ENCODE measurements at regions of chr7 and their contacts with region 1.

Region 1: GRCh38 chr7:32266932-32267475 is 196.8 kb upstream of the PDE1C start:
- DNase-seq: no peak
- H3K4me3 ChIP-seq: no peak overlapping the region
- H3K27ac ChIP-seq: no peak overlapping the region
- H3K4me1 ChIP-seq: peaks cover 0 to 2% (median 0%) of the 10 kb centered on the region in 4 experiments; a peak in 3 of 7 replicates
- H3K27me3 ChIP-seq: peaks cover 0 to 1% (median 0%) of the 10 kb centered on the region in 4 experiments; a peak in 1 of 7 replicates
- CTCF ChIP-seq: peak; percentile 51 to 61 (median 53)
- EP300 ChIP-seq: no peak
- POLR2A ChIP-seq: no peak
- RAD21 ChIP-seq: peak; percentile 82 to 84

Region 2: DNA sequence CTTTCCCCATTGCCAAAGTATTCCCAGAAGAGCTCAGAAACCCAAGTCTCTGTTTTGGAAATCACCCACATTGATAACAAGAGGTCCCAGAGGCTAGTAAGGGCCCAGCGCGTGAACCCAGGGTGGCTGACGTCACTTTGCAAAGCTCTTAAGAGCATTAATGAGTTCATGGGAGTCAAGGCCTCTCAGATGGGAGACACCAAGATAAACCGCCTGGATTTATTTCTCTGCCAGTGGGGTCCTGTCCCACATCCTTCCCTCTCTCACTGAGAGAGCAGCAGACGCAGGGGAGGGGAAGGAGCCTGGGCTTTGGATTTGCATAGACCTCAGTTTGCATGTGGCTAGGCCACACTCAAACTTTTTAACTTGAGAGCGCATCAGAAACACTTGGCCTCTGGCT is 12.0 kb before region 1 on chr7:
- CTCF ChIA-PET with region 1: interaction called, 14 read pairs
- POLR2A ChIA-PET with region 1: no interaction called
- DNase-seq: no peak
- H3K4me3 ChIP-seq: no peak overlapping the region
- H3K27ac ChIP-seq: no peak overlapping the region
- H3K4me1 ChIP-seq: peaks cover 0 to 2% (median 1%) of the 10 kb centered on the region in 4 experiments; a peak in 3 of 7 replicates
- H3K27me3 ChIP-seq: no peaks in the 10 kb centered on the region; a peak in 1 of 7 replicates
- CTCF ChIP-seq: no peak
- EP300 ChIP-seq: no peak
- POLR2A ChIP-seq: no peak
- RAD21 ChIP-seq: no peak

Region 3: GRCh38 chr7:32357535-32358277 is 90.7 kb after region 1 on chr7:
- CTCF ChIA-PET with region 1: interaction called, 30 read pairs
- POLR2A ChIA-PET with region 1: no interaction called
- DNase-seq: no peak
- H3K4me3 ChIP-seq: no peak overlapping the region
- H3K27ac ChIP-seq: no peak overlapping the region
- H3K4me1 ChIP-seq: no peaks in the 10 kb centered on the region
- H3K27me3 ChIP-seq: no peaks in the 10 kb centered on the region; a peak in 1 of 7 replicates
- CTCF ChIP-seq: peak in 2 of 3 experiments; percentile 66 to 72; a peak in 3 of 4 replicates
- EP300 ChIP-seq: no peak
- POLR2A ChIP-seq: no peak
- RAD21 ChIP-seq: peak; percentile 82 to 88

Measured in H1 (cell line).